K562 (cell line): ENCODE measurements at regions of chr1 and their contacts with region 1.

Region 1: GRCh38 chr1:68470388-68470970 is 20.7 kb upstream of the RPE65 start:
- DNase-seq: peak in 1 of 4 experiments; percentile 17
- ATAC-seq: peak; percentile 66; the same call in 2 of the 3 replicates
- H3K4me3 ChIP-seq: no peak overlapping the region
- H3K27ac ChIP-seq: no peak overlapping the region
- H3K4me1 ChIP-seq: no peaks in the 10 kb centered on the region
- H3K27me3 ChIP-seq: no peaks in the 10 kb centered on the region
- CTCF ChIP-seq: peak; percentile 16 to 70 (median 47); a peak in 4 of 6 replicates
- EP300 ChIP-seq: no peak
- POLR2A ChIP-seq: no peak
- RAD21 ChIP-seq: peak; percentile 62 to 64

Region 2: GRCh38 chr1:68590473-68590872 is 120.0 kb after region 1 on chr1:
- CTCF ChIA-PET with region 1: no interaction called
- POLR2A ChIA-PET with region 1: no interaction called
- in situ Hi-C with region 1: no loop called
- intact Hi-C with region 1: loop called (anchors 5 kb)
- DNase-seq: no peak
- ATAC-seq: no peak
- H3K4me3 ChIP-seq: no peak overlapping the region
- H3K27ac ChIP-seq: no peak overlapping the region
- H3K4me1 ChIP-seq: no peaks in the 10 kb centered on the region
- H3K27me3 ChIP-seq: no peaks in the 10 kb centered on the region
- CTCF ChIP-seq: no peak
- EP300 ChIP-seq: no peak
- POLR2A ChIP-seq: no peak
- RAD21 ChIP-seq: no peak